CD4-positive, alpha-beta memory T cell (primary cell): ENCODE measurements at regions of chr22 and their contacts with region 1.

Region 1: GRCh38 chr22:22877523-22878210 is 9.9 kb upstream of the IGLL5 start:
- DNase-seq: peak; percentile 72 to 74 (median 73)
- H3K4me3 ChIP-seq: no peak overlapping the region
- H3K4me3 Mint-ChIP-seq: no peak overlapping the region
- H3K27ac ChIP-seq: no peak overlapping the region
- H3K27ac Mint-ChIP-seq: peak overlapping the region in 2 of 7 donors; percentile 42 to 76
- H3K4me1 ChIP-seq: no peaks in the 10 kb centered on the region
- H3K4me1 Mint-ChIP-seq: peaks cover 0 to 5% (median 2%) of the 10 kb centered on the region in 4 donors
- H3K27me3 ChIP-seq: no peaks in the 10 kb centered on the region
- H3K27me3 Mint-ChIP-seq: no peaks in the 10 kb centered on the region

Region 2: GRCh38 chr22:22770280-22770871 is 107.3 kb before region 1 on chr22:
- CTCF ChIA-PET with region 1: interaction called, 53 read pairs
- POLR2A ChIA-PET with region 1: interaction called, 4 read pairs
- intact Hi-C with region 1: no loop called
- DNase-seq: peak; percentile 20 to 46 (median 30)
- H3K4me3 ChIP-seq: no peak overlapping the region
- H3K4me3 Mint-ChIP-seq: no peak overlapping the region
- H3K27ac ChIP-seq: no peak overlapping the region
- H3K27ac Mint-ChIP-seq: peak overlapping the region in 5 of 7 donors; percentile 2 to 72 (median 23)
- H3K4me1 ChIP-seq: no peaks in the 10 kb centered on the region
- H3K4me1 Mint-ChIP-seq: peaks cover 10 to 28% (median 19%) of the 10 kb centered on the region in 4 donors
- H3K27me3 ChIP-seq: no peaks in the 10 kb centered on the region
- H3K27me3 Mint-ChIP-seq: peaks cover 3 to 4% of the 10 kb centered on the region in 2 donors

Region 3: GRCh38 chr22:22802339-22802970 is 75.2 kb before region 1 on chr22:
- CTCF ChIA-PET with region 1: interaction called, 431 read pairs
- POLR2A ChIA-PET with region 1: interaction called, 4 read pairs
- intact Hi-C with region 1: loop called (anchors 1 kb)
- DNase-seq: peak in 2 of 5 donors; percentile 24 to 38
- H3K4me3 ChIP-seq: no peak overlapping the region
- H3K4me3 Mint-ChIP-seq: peak overlapping the region in 1 of 8 donors; percentile 31
- H3K27ac ChIP-seq: no peak overlapping the region
- H3K27ac Mint-ChIP-seq: peak overlapping the region in 1 of 7 donors; percentile 50
- H3K4me1 ChIP-seq: no peaks in the 10 kb centered on the region
- H3K4me1 Mint-ChIP-seq: peaks cover 12 to 40% (median 28%) of the 10 kb centered on the region in 4 donors
- H3K27me3 ChIP-seq: no peaks in the 10 kb centered on the region
- H3K27me3 Mint-ChIP-seq: no peaks in the 10 kb centered on the region

Region 4: DNA sequence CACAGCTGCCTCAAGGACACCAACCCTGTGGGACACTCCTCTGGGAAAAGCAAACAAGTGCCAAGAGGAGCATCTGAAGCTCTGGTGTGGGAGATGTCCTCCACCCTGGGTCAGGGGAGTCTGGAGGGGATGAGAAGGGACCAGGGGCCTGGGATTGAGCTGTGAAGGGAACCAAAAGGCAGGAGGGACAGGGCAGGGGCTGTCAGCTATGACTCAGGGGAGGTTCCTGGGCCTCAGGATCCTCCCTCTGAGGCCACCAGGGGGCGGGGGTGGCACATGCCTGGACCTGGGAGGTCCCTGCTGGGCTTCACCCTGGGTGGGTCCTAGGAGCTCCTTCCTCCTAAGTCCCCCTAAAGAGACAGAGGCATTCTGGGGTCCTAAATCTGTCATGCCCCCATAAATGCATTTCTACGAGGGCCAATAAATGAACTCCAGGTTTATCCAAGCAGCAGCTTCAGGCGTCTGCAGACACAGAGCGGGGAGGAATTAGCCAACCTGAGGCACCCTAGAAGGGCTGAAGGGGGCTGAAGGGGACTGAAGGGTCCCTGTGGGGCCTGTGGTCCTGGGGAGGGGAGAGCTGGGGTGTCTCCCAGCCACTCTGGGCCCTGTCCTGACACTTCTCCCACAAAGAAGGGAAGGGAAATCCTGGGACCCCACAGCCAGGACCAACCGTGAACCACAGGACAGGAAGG is 21.9 kb before region 1 on chr22:
- CTCF ChIA-PET with region 1: interaction called, 47 read pairs
- POLR2A ChIA-PET with region 1: interaction called, 3 read pairs
- intact Hi-C with region 1: no loop called
- DNase-seq: peak in 4 of 5 donors; percentile 11 to 25 (median 16)
- H3K4me3 ChIP-seq: no peak overlapping the region
- H3K4me3 Mint-ChIP-seq: no peak overlapping the region
- H3K27ac ChIP-seq: no peak overlapping the region
- H3K27ac Mint-ChIP-seq: peak overlapping the region in 4 of 7 donors; percentile 1 to 74 (median 53)
- H3K4me1 ChIP-seq: no peaks in the 10 kb centered on the region
- H3K4me1 Mint-ChIP-seq: peaks cover 3 to 11% (median 5%) of the 10 kb centered on the region in 4 donors
- H3K27me3 ChIP-seq: no peaks in the 10 kb centered on the region
- H3K27me3 Mint-ChIP-seq: peaks cover 0 to 1% of the 10 kb centered on the region in 2 donors